GM10248 (cell line): ENCODE measurements at regions of chr3 and their contacts with region 1.

Region 1: GRCh38 chr3:179898024-179898423 is 138.7 kb downstream of the PEX5L start:
- DNase-seq: peak; percentile 19
- CTCF ChIP-seq: no peak

Region 2: DNA sequence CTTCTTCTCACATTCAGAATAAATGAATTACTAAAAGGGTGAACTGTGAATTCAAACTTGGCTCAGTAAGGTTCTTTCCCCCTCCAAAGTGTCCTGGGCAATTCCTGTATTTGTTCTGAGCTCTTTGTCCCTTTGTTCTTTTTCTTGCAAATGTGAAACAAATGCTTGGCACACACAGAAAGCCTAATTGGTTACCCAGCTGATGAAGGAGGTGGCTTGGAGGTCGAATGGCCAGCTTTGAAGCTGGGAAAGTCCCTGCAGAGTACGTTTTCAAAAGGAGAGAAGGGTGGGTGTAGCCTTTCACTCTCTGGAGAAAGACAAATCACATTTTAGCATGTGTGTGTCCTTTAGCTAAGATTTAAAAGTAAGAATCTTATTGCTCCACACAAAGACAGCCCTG is 15.7 kb before region 1 on chr3:
- CTCF ChIA-PET with region 1: interaction called, 20 read pairs
- POLR2A ChIA-PET with region 1: no interaction called
- DNase-seq: peak; percentile 60
- CTCF ChIP-seq: no peak

Region 3: DNA sequence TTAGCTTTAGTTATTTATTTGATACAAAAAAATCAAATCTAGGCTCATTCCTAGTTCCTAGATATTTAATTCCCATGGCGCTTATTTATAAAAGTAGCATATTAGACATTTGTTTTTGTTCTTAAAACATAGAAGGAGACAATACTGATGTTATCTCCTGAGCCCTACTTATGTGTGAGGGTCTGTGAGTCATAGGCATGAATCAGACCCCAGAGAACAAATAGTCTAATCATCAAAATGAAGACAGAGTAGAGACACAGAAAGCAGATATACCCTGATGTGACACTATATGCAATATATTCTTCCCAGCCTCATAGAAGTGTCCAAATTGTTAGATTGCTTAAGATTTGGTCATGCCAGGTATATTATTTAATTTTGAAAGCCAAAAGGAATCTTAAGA is 93.9 kb after region 1 on chr3:
- CTCF ChIA-PET with region 1: no interaction called
- POLR2A ChIA-PET with region 1: no interaction called
- DNase-seq: no peak
- CTCF ChIP-seq: no peak